B cell (primary cell): ENCODE measurements at regions of chr14 and their contacts with region 1.

Region 1: DNA sequence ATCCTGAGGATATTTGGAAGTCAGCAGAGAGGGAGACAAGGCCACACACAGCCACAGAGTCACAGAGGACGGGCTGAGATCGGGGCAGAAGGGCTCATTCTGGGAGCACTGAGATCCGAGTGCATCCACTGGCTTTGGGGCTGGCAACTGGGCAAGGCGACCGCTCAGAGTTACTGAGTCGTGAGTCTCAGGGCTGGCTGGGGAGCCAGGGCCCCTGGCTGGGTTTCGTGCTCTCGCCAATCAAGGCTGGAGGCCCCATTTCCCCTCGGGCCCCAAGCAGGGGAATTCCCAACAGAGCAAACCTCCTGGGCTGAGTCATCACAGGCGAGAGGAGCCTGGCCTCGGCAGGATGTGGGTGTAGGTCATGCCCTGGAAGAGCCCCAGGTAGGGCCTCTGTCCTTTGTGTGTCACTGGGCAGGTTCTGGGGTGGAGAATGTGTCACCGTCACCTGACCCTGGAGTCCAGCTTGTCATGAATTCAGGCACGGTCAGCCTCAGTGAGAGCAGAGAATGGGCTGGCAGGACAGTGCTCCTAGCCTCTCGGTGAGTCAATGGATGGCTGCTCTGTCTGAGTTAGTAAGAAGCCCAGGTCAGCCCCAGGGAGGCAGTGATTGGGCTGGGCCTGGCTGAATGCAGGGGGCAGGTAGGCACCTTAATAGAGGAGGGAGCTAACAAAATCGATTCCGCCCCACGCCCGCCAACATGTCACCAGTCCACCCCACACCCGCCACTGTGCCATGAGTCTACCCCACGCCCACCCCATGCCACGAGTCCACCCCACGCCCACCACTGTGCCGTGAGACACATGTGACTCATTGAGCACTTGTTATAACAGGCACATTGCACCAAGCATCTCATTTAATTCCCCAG is 16.9 kb downstream of the ASB2 start:
- DNase-seq: peak; percentile 92
- ATAC-seq: peak; percentile 71
- H3K4me3 ChIP-seq: peak overlapping the region in 1 of 5 experiments; percentile 19
- H3K4me3 Mint-ChIP-seq: peak overlapping the region; percentile 78
- H3K27ac ChIP-seq: peak overlapping the region; percentile 68 to 75
- H3K27ac Mint-ChIP-seq: peak overlapping the region; percentile 95
- H3K4me1 ChIP-seq: peaks cover 96 to 97% of the 10 kb centered on the region in 2 donors
- H3K4me1 Mint-ChIP-seq: peaks cover 92% of the 10 kb centered on the region
- H3K27me3 ChIP-seq: no peaks in the 10 kb centered on the region
- H3K27me3 Mint-ChIP-seq: no peaks in the 10 kb centered on the region
- CTCF ChIP-seq: no peak

Region 2: DNA sequence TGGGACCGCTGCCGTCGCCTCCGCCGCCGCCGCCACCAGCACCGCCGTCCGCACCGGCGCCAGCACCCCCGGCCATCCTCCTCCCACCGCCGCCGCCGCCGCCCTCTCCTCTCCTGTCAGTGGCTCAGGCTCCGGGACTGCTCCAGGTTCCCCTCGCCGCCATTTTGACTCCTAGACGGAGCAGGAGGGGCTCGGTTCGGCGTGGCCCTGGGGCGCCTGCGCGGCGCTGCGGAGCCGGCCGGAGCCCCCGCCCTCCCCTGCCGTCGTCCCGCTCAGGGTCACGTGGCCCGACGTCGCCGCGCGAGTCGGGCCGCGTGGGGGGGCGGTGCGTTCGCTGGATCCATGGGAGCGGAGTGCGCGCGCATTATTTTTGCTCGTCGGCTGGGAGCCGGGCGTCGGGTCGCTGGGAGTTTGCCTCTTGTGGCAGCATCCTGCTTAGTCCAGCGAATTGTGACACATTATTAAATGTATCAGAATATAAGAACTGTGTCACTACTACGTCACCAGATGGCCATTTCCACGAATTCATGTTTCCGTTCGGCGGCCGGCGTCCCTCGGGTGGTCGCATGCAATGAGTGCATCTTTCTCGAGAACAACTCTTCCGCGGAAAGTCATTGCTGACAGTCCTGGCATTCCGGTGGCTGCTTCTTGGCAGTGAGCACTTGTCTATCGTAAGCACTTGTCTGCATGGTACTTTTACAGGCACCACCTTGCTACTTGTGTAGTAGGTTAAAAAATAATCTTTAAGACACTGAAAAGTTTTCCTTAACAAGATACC is 626.4 kb before region 1 on chr14 and contains the start of gene BTBD7:
- CTCF ChIA-PET with region 1: no interaction called
- POLR2A ChIA-PET with region 1: no interaction called
- intact Hi-C with region 1: loop called (anchors 2 kb)
- DNase-seq: peak; percentile 96
- ATAC-seq: peak; percentile 90
- H3K4me3 ChIP-seq: peak within 1 kb of the TSS; percentile 66 to 95 (median 82)
- H3K4me3 Mint-ChIP-seq: peak within 1 kb of the TSS; percentile 92
- H3K27ac ChIP-seq: peak within 1 kb of the TSS; percentile 59 to 92
- H3K27ac Mint-ChIP-seq: peak within 1 kb of the TSS; percentile 95
- H3K4me1 ChIP-seq: peaks cover 19 to 31% of the 10 kb centered on the region in 2 donors
- H3K4me1 Mint-ChIP-seq: peaks cover 49% of the 10 kb centered on the region
- H3K27me3 ChIP-seq: no peaks in the 10 kb centered on the region
- H3K27me3 Mint-ChIP-seq: no peaks in the 10 kb centered on the region
- CTCF ChIP-seq: no peak
- total RNA-seq, gene BTBD7: 48.6 and 49.0 TPM in 2 replicates

Region 3: GRCh38 chr14:93970549-93970946 is 11.1 kb after region 1 on chr14:
- CTCF ChIA-PET with region 1: interaction called, 117 read pairs
- POLR2A ChIA-PET with region 1: interaction called, 12 read pairs
- intact Hi-C with region 1: loop called (anchors 1 kb)
- DNase-seq: peak; percentile 77
- ATAC-seq: peak; percentile 58
- H3K4me3 ChIP-seq: peak overlapping the region; percentile 30 to 78 (median 70)
- H3K4me3 Mint-ChIP-seq: peak overlapping the region; percentile 93
- H3K27ac ChIP-seq: peak overlapping the region; percentile 31 to 44
- H3K27ac Mint-ChIP-seq: peak overlapping the region; percentile 86
- H3K4me1 ChIP-seq: peaks cover 60 to 62% of the 10 kb centered on the region in 2 donors
- H3K4me1 Mint-ChIP-seq: peaks cover 64% of the 10 kb centered on the region
- H3K27me3 ChIP-seq: peaks cover 0 to 19% (median 9%) of the 10 kb centered on the region in 4 experiments
- H3K27me3 Mint-ChIP-seq: peaks cover 15% of the 10 kb centered on the region
- CTCF ChIP-seq: peak; percentile 78

Region 4: DNA sequence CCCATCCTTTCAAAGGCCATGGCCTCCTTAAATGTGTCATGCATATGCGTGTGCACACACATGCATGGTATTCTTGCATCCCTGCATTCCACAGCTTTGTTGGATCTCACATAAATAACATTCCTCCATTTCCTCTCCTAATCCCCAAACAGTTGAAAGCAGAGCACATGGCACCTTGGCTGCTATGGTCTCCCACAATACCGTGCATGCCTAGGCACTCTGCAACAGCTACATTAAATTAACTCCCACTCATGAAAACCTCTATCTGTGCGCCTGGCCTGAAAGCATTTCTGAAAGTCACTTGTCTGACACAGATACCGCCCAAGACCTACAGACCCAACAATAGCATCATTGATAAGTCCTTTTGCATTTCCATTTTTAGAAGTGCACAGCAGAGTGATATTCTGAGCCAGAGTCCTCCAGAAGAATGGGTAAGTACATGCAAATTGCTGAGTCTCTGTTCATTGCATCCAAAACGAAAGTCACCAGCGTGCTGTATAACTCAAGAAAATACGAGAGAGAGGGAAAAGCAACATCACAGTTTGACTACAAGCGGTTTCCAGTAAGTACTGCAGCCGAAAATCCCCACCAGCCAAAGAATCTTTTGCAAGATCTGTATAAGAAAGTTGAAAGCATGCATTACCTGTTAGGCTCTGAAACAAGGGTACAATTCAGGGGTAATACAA is 16.5 kb after region 1 on chr14:
- CTCF ChIA-PET with region 1: interaction called, 117 read pairs
- POLR2A ChIA-PET with region 1: interaction called, 12 read pairs
- intact Hi-C with region 1: loop called (anchors 1 kb)
- DNase-seq: no peak
- ATAC-seq: no peak
- H3K4me3 ChIP-seq: peak overlapping the region in 2 of 5 experiments; percentile 4 to 15
- H3K4me3 Mint-ChIP-seq: peak overlapping the region; percentile 62
- H3K27ac ChIP-seq: no peak overlapping the region
- H3K27ac Mint-ChIP-seq: no peak overlapping the region
- H3K4me1 ChIP-seq: peaks cover 31 to 43% of the 10 kb centered on the region in 2 donors
- H3K4me1 Mint-ChIP-seq: peaks cover 44% of the 10 kb centered on the region
- H3K27me3 ChIP-seq: peaks cover 0 to 43% (median 25%) of the 10 kb centered on the region in 4 experiments
- H3K27me3 Mint-ChIP-seq: peaks cover 37% of the 10 kb centered on the region
- CTCF ChIP-seq: no peak

Region 5: DNA sequence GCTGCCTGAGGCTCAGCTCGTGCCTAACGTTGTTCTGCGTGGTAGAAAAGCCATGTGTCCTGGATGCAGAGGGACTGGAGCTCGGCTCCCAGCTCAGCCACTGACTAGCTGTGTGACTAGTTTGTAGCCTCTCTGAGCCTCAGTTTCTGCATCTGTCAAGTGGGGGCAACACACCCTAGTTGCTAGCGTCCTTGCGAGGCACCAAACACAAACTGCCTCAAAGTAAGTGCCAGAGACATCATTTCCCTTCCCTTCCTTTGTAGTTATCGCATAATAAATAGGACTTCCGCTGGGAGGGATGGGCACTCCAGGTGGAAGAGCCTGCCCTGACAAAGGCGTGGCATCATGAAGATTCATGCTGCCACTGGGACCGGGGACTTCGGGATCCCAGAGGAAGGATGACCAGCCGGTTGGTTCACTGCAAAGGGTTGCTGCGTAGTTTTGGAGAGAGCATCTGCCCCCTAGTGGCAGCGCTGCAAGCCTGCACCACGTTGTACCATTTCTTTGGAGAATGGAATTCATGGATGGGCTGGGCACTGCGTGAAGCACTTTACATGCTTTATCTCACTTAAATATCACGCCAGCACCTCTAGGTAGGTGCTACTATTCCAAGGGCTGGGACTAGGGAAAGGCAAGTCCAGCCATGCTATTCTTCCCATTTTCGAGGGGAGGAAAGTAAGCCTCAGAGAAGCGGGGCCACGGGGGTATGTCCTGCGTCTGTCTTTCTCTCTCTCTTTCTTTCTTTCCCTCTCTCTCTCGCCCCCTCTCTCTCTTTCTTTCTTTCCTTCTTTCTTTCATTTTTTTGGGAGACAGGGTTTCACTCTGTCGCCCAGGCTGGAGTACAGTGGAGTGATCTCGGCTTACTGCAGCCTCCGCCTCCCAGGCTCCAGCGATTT is 42.3 kb after region 1 on chr14:
- CTCF ChIA-PET with region 1: interaction called, 10 read pairs
- POLR2A ChIA-PET with region 1: no interaction called
- intact Hi-C with region 1: no loop called
- DNase-seq: peak; percentile 79
- ATAC-seq: peak; percentile 85
- H3K4me3 ChIP-seq: no peak overlapping the region
- H3K4me3 Mint-ChIP-seq: no peak overlapping the region
- H3K27ac ChIP-seq: no peak overlapping the region
- H3K27ac Mint-ChIP-seq: peak overlapping the region; percentile 20
- H3K4me1 ChIP-seq: peaks cover 4 to 6% of the 10 kb centered on the region in 2 donors
- H3K4me1 Mint-ChIP-seq: peaks cover 4% of the 10 kb centered on the region
- H3K27me3 ChIP-seq: peaks cover 0 to 28% (median 9%) of the 10 kb centered on the region in 4 experiments
- H3K27me3 Mint-ChIP-seq: peaks cover 48% of the 10 kb centered on the region
- CTCF ChIP-seq: peak; percentile 99

Region 6: DNA sequence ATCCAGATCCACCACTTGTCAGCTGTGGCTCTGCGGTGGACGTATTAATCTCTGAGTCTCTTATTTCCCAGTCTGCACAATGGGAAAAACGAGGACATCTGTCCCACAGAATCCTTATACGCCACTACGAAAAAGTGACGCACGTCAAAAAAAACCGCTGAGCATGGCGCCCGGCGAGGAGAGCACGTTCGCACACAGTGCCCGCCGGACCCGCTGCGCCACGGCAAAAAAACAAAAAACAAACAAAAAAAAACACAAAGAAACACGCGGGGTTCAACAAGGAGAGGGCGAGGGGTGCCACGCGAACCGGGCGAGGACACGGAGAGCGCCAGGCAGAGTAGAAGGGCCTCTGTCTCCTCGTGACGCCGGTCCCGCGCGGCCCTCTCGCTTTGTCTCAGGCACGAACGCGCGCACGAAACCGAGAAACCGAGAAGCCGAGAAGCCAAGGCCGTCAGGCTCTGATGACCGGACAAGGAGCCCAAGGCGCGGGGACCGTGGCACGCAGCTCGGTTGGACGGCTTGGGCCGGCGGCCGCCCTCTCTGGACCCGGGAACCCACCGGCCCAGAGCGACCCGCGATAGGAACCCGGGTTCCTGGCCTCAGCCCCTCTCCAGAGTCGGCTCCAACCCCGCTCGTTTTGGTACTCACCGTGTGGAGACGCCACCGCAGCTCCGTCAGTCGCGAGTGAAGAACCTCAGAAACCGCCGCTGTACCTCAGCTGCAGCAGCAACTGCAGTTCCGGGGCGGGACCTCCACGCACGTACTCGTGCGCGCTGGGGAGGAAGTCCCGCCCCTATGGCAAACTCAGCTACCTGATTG is 121.2 kb after region 1 on chr14 and contains the start of gene DDX24:
- CTCF ChIA-PET with region 1: no interaction called
- POLR2A ChIA-PET with region 1: no interaction called
- intact Hi-C with region 1: loop called (anchors 2 kb)
- DNase-seq: peak; percentile 97
- ATAC-seq: peak; percentile 97
- H3K4me3 ChIP-seq: peak within 1 kb of the TSS; percentile 91 to 99 (median 97)
- H3K4me3 Mint-ChIP-seq: peak within 1 kb of the TSS; percentile 97
- H3K27ac ChIP-seq: peak within 1 kb of the TSS; percentile 83 to 93
- H3K27ac Mint-ChIP-seq: peak within 1 kb of the TSS; percentile 97
- H3K4me1 ChIP-seq: peaks cover 36 to 45% of the 10 kb centered on the region in 2 donors
- H3K4me1 Mint-ChIP-seq: peaks cover 46% of the 10 kb centered on the region
- H3K27me3 ChIP-seq: no peaks in the 10 kb centered on the region
- H3K27me3 Mint-ChIP-seq: no peaks in the 10 kb centered on the region
- CTCF ChIP-seq: no peak
- total RNA-seq, gene DDX24: 191 and 211 TPM in 2 replicates